CD4-positive, alpha-beta T cell (primary cell): ENCODE measurements at regions of chr4 and their contacts with region 1.

Region 1: DNA sequence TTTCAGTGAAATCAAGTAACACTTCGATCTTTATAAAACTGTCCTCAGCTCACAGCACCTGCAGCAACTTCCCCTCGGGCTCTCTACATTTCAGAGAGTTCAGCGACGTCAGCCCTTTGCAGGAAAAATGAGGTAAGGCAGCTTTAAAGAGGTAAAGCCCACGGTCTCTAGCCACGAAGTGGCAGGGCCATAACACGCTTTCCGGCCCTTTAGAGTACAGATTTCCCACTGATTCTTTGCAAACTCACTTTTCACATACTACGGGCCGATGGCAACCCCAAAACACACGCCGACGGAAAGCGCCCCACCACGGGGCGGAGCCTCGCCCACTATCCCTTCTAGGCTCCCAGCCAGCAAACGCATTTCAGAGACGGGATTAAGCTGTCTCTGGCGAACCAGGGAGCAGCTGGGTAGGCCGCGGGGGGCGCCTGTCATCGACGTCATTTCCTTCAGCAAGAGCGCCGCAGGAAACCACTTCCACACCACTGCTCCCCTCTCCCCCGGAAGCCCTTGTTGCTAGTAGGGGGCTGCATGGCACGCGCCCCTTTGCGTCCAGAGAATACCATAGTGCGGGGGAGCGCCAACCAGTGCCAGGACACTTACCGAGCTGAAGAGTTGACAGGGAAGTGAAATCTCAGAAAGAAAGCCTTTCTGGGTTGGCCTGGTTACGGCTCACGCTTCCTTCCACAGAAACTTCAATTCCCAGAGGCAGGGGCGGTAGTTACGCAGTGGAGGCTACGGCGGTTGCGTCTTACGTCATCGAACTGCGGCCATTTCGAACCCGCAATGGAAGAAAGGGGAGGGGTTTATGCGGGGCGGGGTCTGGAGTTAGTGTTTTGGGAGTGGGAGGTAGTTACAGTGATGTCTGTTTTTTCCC is at the start of gene TRMT10A:
- DNase-seq: peak; percentile 88 to 98 (median 92)
- ATAC-seq: peak; percentile 81
- H3K4me3 ChIP-seq: peak within 1 kb of the TSS; percentile 80
- H3K4me3 Mint-ChIP-seq: peak within 1 kb of the TSS; percentile 91
- H3K27ac ChIP-seq: peak within 1 kb of the TSS; percentile 98 to 99
- H3K27ac Mint-ChIP-seq: peak within 1 kb of the TSS; percentile 99
- H3K4me1 ChIP-seq: peaks cover 11% of the 10 kb centered on the region
- H3K4me1 Mint-ChIP-seq: peaks cover 25% of the 10 kb centered on the region
- H3K27me3 ChIP-seq: peaks cover 0 to 9% of the 10 kb centered on the region in 2 experiments
- H3K27me3 Mint-ChIP-seq: peaks cover 28% of the 10 kb centered on the region
- CTCF ChIP-seq: no peak
- total RNA-seq, gene TRMT10A: 1.6 to 2.0 TPM

Region 2: DNA sequence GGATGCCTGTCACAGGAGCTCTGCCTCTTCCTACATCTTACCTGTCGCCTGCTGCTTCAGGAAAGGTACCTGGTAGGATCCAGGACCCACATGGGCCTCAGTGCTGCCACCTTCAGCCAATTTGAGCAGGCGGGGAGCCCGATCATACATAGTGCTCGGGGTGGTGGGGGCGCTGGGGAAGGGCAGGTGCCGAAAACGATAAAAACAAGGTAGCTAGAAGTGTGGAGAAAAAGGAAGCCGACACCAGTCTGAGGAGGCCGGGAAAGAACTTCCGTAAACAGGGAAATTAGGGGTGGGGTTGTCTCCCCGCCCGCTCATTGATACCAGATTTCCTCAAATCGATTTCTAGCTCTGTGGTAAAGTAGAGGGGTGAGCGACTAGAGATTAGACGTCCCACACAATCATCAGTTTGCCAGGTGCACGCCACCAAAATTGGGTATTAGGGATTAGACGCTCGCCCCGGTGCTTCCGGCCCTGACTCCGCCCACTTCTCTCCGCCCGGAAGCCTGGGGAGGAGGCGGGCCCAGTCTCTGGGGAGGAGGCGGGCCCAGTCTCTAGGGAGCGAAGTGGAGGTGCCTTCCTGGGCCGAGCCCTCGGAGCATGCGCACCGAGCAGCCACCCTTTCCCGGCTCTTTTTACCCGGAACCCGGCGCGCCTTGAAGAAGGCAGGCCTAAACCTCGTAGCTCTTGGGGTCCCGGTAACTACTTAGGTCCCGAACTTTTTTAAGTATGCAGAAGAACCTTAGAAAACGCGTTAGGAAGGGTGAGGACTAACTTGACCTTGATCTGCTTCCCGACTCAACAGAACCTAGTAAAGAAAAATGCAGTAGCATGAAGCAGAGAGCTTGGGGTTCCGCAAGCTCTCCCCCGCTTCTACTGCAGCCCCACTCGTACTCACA is 1420.3 kb before region 1 on chr4 and contains the start of gene STPG2:
- CTCF ChIA-PET with region 1: no interaction called
- POLR2A ChIA-PET with region 1: interaction called, 4 read pairs
- intact Hi-C with region 1: loop called (anchors 5 kb)
- DNase-seq: peak; percentile 85 to 97 (median 94)
- ATAC-seq: peak; percentile 98
- H3K4me3 ChIP-seq: peak within 1 kb of the TSS; percentile 88
- H3K4me3 Mint-ChIP-seq: peak within 1 kb of the TSS; percentile 90
- H3K27ac ChIP-seq: peak within 1 kb of the TSS; percentile 75 to 96
- H3K27ac Mint-ChIP-seq: peak within 1 kb of the TSS; percentile 93
- H3K4me1 ChIP-seq: peaks cover 17% of the 10 kb centered on the region
- H3K4me1 Mint-ChIP-seq: peaks cover 21% of the 10 kb centered on the region
- H3K27me3 ChIP-seq: no peaks in the 10 kb centered on the region
- H3K27me3 Mint-ChIP-seq: no peaks in the 10 kb centered on the region
- CTCF ChIP-seq: peak; percentile 73
- total RNA-seq, gene STPG2: 0.22 to 0.28 TPM

Region 3: GRCh38 chr4:98928505-98929340 is 634.8 kb before region 1 on chr4 and contains the start of gene EIF4E:
- CTCF ChIA-PET with region 1: no interaction called
- POLR2A ChIA-PET with region 1: interaction called, 6 read pairs
- intact Hi-C with region 1: loop called (anchors 5 kb)
- DNase-seq: peak; percentile 90 to 100 (median 95)
- ATAC-seq: peak; percentile 82
- H3K4me3 ChIP-seq: peak within 1 kb of the TSS; percentile 96
- H3K4me3 Mint-ChIP-seq: peak within 1 kb of the TSS; percentile 98
- H3K27ac ChIP-seq: peak within 1 kb of the TSS; percentile 85 to 94
- H3K27ac Mint-ChIP-seq: peak within 1 kb of the TSS; percentile 98
- H3K4me1 ChIP-seq: peaks cover 17% of the 10 kb centered on the region
- H3K4me1 Mint-ChIP-seq: peaks cover 46% of the 10 kb centered on the region
- H3K27me3 ChIP-seq: no peaks in the 10 kb centered on the region
- H3K27me3 Mint-ChIP-seq: no peaks in the 10 kb centered on the region
- CTCF ChIP-seq: peak; percentile 34
- total RNA-seq, gene EIF4E: 47.2 to 49.2 TPM

Region 4: GRCh38 chr4:99763635-99764101 is 200.1 kb after region 1 on chr4:
- CTCF ChIA-PET with region 1: no interaction called
- POLR2A ChIA-PET with region 1: no interaction called
- intact Hi-C with region 1: no loop called
- DNase-seq: no peak
- ATAC-seq: no peak
- H3K4me3 ChIP-seq: no peak overlapping the region
- H3K4me3 Mint-ChIP-seq: no peak overlapping the region
- H3K27ac ChIP-seq: no peak overlapping the region
- H3K27ac Mint-ChIP-seq: no peak overlapping the region
- H3K4me1 ChIP-seq: no peaks in the 10 kb centered on the region
- H3K4me1 Mint-ChIP-seq: no peaks in the 10 kb centered on the region
- H3K27me3 ChIP-seq: peaks cover 0 to 4% of the 10 kb centered on the region in 2 experiments
- H3K27me3 Mint-ChIP-seq: no peaks in the 10 kb centered on the region
- CTCF ChIP-seq: no peak

Region 5: DNA sequence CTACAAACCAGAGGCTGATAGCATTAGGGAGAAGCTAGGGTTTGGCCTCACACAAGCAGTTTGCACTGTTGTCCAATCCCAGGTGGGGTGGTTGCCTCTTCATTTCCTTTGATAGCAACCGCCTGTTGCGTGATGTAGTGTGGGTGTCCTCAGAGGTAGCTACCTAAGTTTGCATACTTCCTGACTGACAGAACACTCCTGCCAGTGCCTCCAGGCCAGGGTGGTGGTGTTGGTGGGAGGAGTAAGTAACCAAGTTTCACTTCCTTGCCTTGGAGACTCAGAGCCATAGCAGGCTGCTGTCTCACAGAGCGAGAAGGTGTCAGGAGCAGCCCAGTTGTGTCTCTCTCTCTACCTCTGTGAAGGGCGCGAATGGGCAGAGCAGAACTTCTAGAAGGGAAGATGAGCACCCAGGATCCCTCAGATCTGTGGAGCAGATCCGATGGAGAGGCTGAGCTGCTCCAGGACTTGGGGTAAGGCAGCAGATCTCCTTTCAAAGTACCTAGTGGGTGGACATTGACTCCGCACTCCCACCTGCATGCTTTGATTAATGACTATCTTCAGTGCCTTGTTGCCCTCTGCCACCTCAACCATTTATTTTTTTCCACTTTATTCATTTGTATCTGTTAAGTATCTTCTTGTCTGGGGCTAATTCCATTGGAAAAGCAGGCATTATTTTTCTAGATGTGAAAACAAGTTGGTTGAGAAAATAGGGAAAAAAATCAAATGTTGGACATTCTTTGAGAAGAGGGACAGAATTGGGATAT is 253.2 kb after region 1 on chr4 and contains the start of gene DAPP1:
- CTCF ChIA-PET with region 1: no interaction called
- POLR2A ChIA-PET with region 1: interaction called, 16 read pairs
- intact Hi-C with region 1: no loop called
- DNase-seq: peak; percentile 60 to 92 (median 72)
- ATAC-seq: peak; percentile 97
- H3K4me3 ChIP-seq: peak within 1 kb of the TSS; percentile 72
- H3K4me3 Mint-ChIP-seq: peak within 1 kb of the TSS; percentile 92
- H3K27ac ChIP-seq: peak within 1 kb of the TSS; percentile 64 to 66
- H3K27ac Mint-ChIP-seq: peak within 1 kb of the TSS; percentile 91
- H3K4me1 ChIP-seq: peaks cover 30% of the 10 kb centered on the region
- H3K4me1 Mint-ChIP-seq: peaks cover 64% of the 10 kb centered on the region
- H3K27me3 ChIP-seq: no peaks in the 10 kb centered on the region
- H3K27me3 Mint-ChIP-seq: no peaks in the 10 kb centered on the region
- CTCF ChIP-seq: no peak
- total RNA-seq, gene DAPP1: 8.3 to 9.1 TPM

Region 6: GRCh38 chr4:99894161-99894997 is 330.8 kb after region 1 on chr4 and contains the start of gene LAMTOR3:
- CTCF ChIA-PET with region 1: interaction called, 6 read pairs
- POLR2A ChIA-PET with region 1: interaction called, 15 read pairs
- intact Hi-C with region 1: loop called in 1 of 2 experiments (anchors 2 kb)
- DNase-seq: peak; percentile 76 to 97 (median 88)
- ATAC-seq: peak; percentile 98
- H3K4me3 ChIP-seq: peak within 1 kb of the TSS; percentile 61
- H3K4me3 Mint-ChIP-seq: peak within 1 kb of the TSS; percentile 99
- H3K27ac ChIP-seq: peak within 1 kb of the TSS; percentile 71 to 80
- H3K27ac Mint-ChIP-seq: peak within 1 kb of the TSS; percentile 96
- H3K4me1 ChIP-seq: peaks cover 23% of the 10 kb centered on the region
- H3K4me1 Mint-ChIP-seq: peaks cover 53% of the 10 kb centered on the region
- H3K27me3 ChIP-seq: no peaks in the 10 kb centered on the region
- H3K27me3 Mint-ChIP-seq: no peaks in the 10 kb centered on the region
- CTCF ChIP-seq: no peak
- total RNA-seq, gene LAMTOR3: 32.0 to 32.8 TPM

Region 7: DNA sequence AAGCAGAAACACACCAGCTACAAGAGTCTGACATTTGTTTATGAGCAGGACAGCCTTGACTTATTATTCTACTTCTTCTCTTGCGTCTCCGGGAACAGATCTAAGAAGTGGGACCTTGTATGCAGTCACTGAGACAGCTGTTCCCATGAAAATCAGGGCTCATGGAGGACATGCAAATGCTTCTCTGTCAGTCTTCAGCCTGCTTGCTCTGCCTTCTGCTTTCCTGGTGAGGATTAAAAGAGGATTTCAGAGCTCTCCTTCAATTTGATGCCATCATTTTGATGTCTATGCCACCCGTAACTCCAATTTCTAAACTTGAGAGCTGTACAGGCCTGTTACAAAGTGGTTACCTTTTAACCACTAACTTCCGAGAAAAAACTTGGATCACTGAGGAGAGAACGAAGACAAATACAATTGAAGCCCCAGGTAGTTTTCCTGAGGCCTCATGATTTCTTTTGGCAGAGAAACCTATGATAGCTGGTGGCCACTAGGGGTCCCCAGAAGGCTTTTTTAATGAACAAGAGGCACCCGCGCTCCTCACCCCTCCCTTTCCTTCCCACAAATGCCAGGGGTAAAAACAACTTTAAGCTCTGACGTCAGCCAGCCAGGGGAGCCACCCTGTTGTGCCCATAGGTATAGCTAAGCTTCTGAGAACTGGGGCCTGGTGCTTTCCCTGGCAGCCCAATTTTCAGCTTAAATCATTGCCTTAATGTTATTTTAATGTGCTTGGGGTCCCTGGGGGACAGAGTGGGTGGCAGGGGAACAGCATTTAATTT is 529.7 kb after region 1 on chr4:
- CTCF ChIA-PET with region 1: interaction called, 3 read pairs
- POLR2A ChIA-PET with region 1: interaction called, 7 read pairs
- intact Hi-C with region 1: loop called in 1 of 2 experiments (anchors 10 kb)
- DNase-seq: peak; percentile 70 to 96 (median 81)
- ATAC-seq: peak; percentile 99
- H3K4me3 ChIP-seq: no peak overlapping the region
- H3K4me3 Mint-ChIP-seq: no peak overlapping the region
- H3K27ac ChIP-seq: no peak overlapping the region
- H3K27ac Mint-ChIP-seq: peak overlapping the region; percentile 92
- H3K4me1 ChIP-seq: peaks cover 7% of the 10 kb centered on the region
- H3K4me1 Mint-ChIP-seq: peaks cover 30% of the 10 kb centered on the region
- H3K27me3 ChIP-seq: no peaks in the 10 kb centered on the region
- H3K27me3 Mint-ChIP-seq: no peaks in the 10 kb centered on the region
- CTCF ChIP-seq: peak; percentile 78